ENCODE measurements at regions of chr17 and their contacts with region 1.

Region 1: GRCh38 chr17:20256144-20256543 is 211.2 kb downstream of the LGALS9B start:
- DNase-seq: no peak
- H3K4me3 ChIP-seq: no peak overlapping the region
- H3K4me3 Mint-ChIP-seq: no peak overlapping the region
- H3K27ac ChIP-seq: no peak overlapping the region
- H3K27ac Mint-ChIP-seq: no peak overlapping the region
- H3K4me1 ChIP-seq: peaks cover 0 to 3% of the 10 kb centered on the region in 2 donors
- H3K4me1 Mint-ChIP-seq: peaks cover 7% of the 10 kb centered on the region
- H3K27me3 ChIP-seq: no peaks in the 10 kb centered on the region
- H3K27me3 Mint-ChIP-seq: peaks cover 0 to 1% (median 0%) of the 10 kb centered on the region in 3 donors
- CTCF ChIP-seq: no peak

Region 2: GRCh38 chr17:20206068-20206467 is 50.1 kb before region 1 on chr17:
- intact Hi-C with region 1: no loop called
- DNase-seq: no peak
- H3K4me3 ChIP-seq: no peak overlapping the region
- H3K4me3 Mint-ChIP-seq: no peak overlapping the region
- H3K27ac ChIP-seq: no peak overlapping the region
- H3K27ac Mint-ChIP-seq: peak overlapping the region in 3 of 7 donors; percentile 2 to 61 (median 54)
- H3K4me1 ChIP-seq: peaks cover 4 to 7% of the 10 kb centered on the region in 2 donors
- H3K4me1 Mint-ChIP-seq: peaks cover 16% of the 10 kb centered on the region
- H3K27me3 ChIP-seq: no peaks in the 10 kb centered on the region
- H3K27me3 Mint-ChIP-seq: peaks cover 0 to 1% (median 0%) of the 10 kb centered on the region in 3 donors
- CTCF ChIP-seq: no peak

Region 3: GRCh38 chr17:20300436-20300934 is 44.3 kb after region 1 on chr17:
- intact Hi-C with region 1: loop called in 1 of 2 experiments (anchors 10 kb)
- DNase-seq: no peak
- H3K4me3 ChIP-seq: no peak overlapping the region
- H3K4me3 Mint-ChIP-seq: no peak overlapping the region
- H3K27ac ChIP-seq: no peak overlapping the region
- H3K27ac Mint-ChIP-seq: peak overlapping the region in 2 of 7 donors; percentile 10 to 61
- H3K4me1 ChIP-seq: no peaks in the 10 kb centered on the region
- H3K4me1 Mint-ChIP-seq: peaks cover 5% of the 10 kb centered on the region
- H3K27me3 ChIP-seq: no peaks in the 10 kb centered on the region
- H3K27me3 Mint-ChIP-seq: peaks cover 0 to 1% (median 0%) of the 10 kb centered on the region in 3 donors
- CTCF ChIP-seq: no peak